ENCODE measurements at regions of chr1 and their contacts with region 1.

Region 1: GRCh38 chr1:6235296-6235677 is 477 bp downstream of the ICMT start:
- DNase-seq: peak; percentile 24
- H3K4me3 Mint-ChIP-seq: peak overlapping the region; percentile 88
- H3K27ac Mint-ChIP-seq: peak overlapping the region; percentile 63
- H3K4me1 Mint-ChIP-seq: peaks cover 36% of the 10 kb centered on the region
- H3K27me3 Mint-ChIP-seq: peaks cover 14% of the 10 kb centered on the region

Region 2: GRCh38 chr1:6205849-6206519 is 29.3 kb before region 1 on chr1 and contains the start of gene RNF207:
- CTCF ChIA-PET with region 1: interaction called, 17 read pairs
- POLR2A ChIA-PET with region 1: interaction called, 16 read pairs
- DNase-seq: peak; percentile 56
- H3K4me3 Mint-ChIP-seq: peak within 1 kb of the TSS; percentile 70
- H3K27ac Mint-ChIP-seq: peak within 1 kb of the TSS; percentile 44
- H3K4me1 Mint-ChIP-seq: peaks cover 24% of the 10 kb centered on the region
- H3K27me3 Mint-ChIP-seq: peaks cover 9% of the 10 kb centered on the region
- total RNA-seq, gene RNF207: 12.4 to 16.4 TPM

Region 3: DNA sequence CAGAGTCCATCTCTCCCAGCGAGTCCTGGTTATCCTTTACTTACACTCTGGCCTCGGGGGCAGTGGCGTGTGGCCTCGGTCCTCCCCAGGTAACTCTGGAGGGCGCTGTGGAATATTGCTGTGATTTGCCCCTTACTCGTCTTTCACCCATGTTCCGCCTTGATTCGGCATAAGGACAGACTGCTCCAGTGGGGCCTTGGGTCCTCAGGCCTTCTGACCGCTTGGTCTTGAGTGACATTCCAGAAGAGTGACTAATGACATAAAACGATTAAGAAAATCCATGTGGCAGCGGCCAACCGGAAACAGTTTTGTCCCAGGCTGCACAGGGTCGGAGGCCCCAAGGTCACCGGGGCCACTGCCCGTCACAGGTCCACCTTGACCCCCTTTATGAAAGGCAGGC is 10.6 kb before region 1 on chr1:
- CTCF ChIA-PET with region 1: no interaction called
- POLR2A ChIA-PET with region 1: interaction called, 13 read pairs
- DNase-seq: no peak
- H3K4me3 Mint-ChIP-seq: no peak overlapping the region
- H3K27ac Mint-ChIP-seq: no peak overlapping the region
- H3K4me1 Mint-ChIP-seq: peaks cover 17% of the 10 kb centered on the region
- H3K27me3 Mint-ChIP-seq: no peaks in the 10 kb centered on the region

Measured in activated CD4-positive, alpha-beta memory T cell treated with anti-CD3 and anti-CD28 coated beads, Interleukin-2, amount 10 ng/mL, durations not matched to agents 7 days and 5 days (primary cell).